ENCODE measurements at regions of chr15 and their contacts with region 1.

Region 1: GRCh38 chr15:70097337-70098169 is at the start of gene TLE3:
- DNase-seq: peak; percentile 96
- ATAC-seq: peak; percentile 56
- H3K4me3 Mint-ChIP-seq: peak within 1 kb of the TSS; percentile 98
- H3K27ac Mint-ChIP-seq: peak within 1 kb of the TSS; percentile 97
- H3K4me1 Mint-ChIP-seq: peaks cover 60% of the 10 kb centered on the region
- H3K27me3 Mint-ChIP-seq: peaks cover 2% of the 10 kb centered on the region
- CTCF ChIP-seq: no peak
- total RNA-seq, gene TLE3: 106 and 110 TPM in 2 replicates

Region 2: GRCh38 chr15:69576035-69576526 is 521.5 kb before region 1 on chr15:
- CTCF ChIA-PET with region 1: interaction called, 10 read pairs
- POLR2A ChIA-PET with region 1: interaction called, 6 read pairs
- intact Hi-C with region 1: loop called (anchors 2 kb)
- DNase-seq: peak; percentile 57
- ATAC-seq: peak; percentile 83
- H3K4me3 Mint-ChIP-seq: no peak overlapping the region
- H3K27ac Mint-ChIP-seq: no peak overlapping the region
- H3K4me1 Mint-ChIP-seq: peaks cover 14% of the 10 kb centered on the region
- H3K27me3 Mint-ChIP-seq: peaks cover 11% of the 10 kb centered on the region
- CTCF ChIP-seq: no peak

Region 3: DNA sequence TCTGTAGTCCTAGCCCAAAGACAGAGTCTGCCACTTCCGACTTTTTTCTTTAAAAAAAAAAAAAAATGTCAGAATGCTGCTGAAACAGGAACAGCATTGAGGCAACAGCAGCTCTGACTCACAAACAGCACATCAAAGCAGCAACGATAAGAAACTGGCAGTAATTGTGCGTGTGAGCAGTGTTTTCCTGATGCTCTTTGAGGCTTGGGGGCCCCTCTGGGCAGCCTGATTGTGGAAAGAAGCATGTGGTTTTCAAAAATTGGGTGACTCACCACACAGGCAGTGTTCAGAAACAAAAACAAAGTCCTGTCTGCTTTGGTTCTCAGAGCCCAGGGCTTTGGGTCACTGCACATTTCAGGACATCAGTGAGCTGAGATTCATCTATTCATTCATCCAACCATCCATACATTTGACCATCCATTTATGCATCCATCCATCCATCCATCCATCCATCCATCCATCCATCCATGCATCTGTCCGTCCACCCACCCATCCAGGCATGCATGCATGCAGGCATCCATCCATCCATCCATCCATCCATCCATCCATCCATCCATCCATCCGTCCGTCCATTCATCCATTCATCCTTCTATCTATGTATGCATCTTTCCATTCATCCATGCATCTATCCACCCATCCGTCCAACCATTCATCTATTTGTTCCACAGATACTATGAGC is 336.5 kb before region 1 on chr15:
- CTCF ChIA-PET with region 1: no interaction called
- POLR2A ChIA-PET with region 1: interaction called, 84 read pairs
- intact Hi-C with region 1: no loop called
- DNase-seq: peak; percentile 41
- ATAC-seq: peak; percentile 71
- H3K4me3 Mint-ChIP-seq: peak overlapping the region; percentile 11
- H3K27ac Mint-ChIP-seq: peak overlapping the region; percentile 57
- H3K4me1 Mint-ChIP-seq: peaks cover 74% of the 10 kb centered on the region
- H3K27me3 Mint-ChIP-seq: no peaks in the 10 kb centered on the region
- CTCF ChIP-seq: no peak

Region 4: DNA sequence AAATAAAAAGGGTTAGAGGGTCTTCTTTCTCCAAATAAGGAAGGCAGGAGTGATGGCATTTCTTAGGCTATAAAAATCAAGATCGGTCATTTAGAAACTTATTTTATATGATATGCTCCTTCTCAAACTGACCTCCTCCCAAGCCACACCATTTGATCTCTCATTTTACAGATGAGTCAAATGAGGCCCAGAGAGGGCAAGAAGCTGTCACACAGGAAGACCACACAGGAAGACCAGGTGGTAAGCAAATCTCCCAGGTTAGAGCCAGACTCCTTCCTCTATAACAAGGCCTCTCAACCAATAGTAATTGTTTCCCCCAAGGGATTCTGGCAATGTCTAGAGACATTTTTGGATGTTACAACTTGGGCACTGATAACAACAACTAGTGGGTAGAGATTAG is 13.6 kb before region 1 on chr15:
- CTCF ChIA-PET with region 1: interaction called, 6 read pairs
- POLR2A ChIA-PET with region 1: interaction called, 18 read pairs
- intact Hi-C with region 1: no loop called
- DNase-seq: no peak
- ATAC-seq: no peak
- H3K4me3 Mint-ChIP-seq: no peak overlapping the region
- H3K27ac Mint-ChIP-seq: no peak overlapping the region
- H3K4me1 Mint-ChIP-seq: peaks cover 70% of the 10 kb centered on the region
- H3K27me3 Mint-ChIP-seq: no peaks in the 10 kb centered on the region
- CTCF ChIP-seq: no peak

Region 5: DNA sequence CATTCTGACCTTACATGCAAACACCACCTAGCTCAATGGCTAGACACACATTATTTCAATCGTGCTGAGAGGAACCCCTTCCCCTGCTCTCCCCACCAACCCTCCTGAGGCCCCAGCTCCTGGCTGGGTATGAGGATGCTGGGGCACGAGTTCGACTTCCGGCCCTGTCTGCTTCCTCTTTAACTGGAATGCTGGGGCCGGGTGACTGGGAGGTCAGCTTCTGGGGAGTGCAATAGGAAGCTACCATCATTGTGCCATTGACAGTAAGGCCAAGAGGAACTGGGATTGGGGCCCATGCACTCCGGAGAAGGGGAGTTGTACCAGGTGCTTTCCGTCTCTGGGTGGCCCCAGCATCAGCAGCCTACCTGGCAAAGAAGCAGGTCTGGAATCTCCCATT is 15.7 kb after region 1 on chr15:
- CTCF ChIA-PET with region 1: no interaction called
- POLR2A ChIA-PET with region 1: no interaction called
- intact Hi-C with region 1: no loop called
- DNase-seq: no peak
- ATAC-seq: no peak
- H3K4me3 Mint-ChIP-seq: no peak overlapping the region
- H3K27ac Mint-ChIP-seq: no peak overlapping the region
- H3K4me1 Mint-ChIP-seq: peaks cover 5% of the 10 kb centered on the region
- H3K27me3 Mint-ChIP-seq: peaks cover 9% of the 10 kb centered on the region
- CTCF ChIP-seq: no peak

Region 6: DNA sequence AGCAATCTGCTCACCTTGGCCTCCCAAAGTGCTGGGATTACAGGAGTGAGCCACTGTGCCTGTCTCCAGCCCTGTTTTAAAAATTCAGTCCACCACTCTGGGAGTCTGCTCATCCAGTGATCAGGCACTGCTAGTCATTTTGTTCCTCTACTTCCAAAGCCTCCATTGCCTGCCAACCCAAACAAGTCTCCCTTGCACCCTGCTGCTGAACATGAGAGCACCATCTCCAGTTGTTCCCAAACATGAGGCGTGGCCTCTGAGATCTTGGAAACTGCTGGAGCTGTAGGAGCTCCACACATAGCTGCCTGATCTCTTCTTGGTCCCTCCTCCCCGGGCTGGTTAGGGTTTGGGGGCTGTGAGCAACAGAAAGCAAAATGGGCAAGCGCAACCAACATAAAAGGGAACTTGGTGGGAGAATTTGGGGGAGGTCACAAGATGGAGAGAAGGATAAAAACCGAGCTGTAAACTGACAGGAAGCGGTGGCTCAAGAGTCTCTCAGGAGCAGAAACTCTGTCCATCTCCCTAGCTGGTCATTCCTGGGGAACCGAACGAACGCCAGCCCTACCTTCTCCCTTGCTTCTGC is 49.7 kb after region 1 on chr15:
- CTCF ChIA-PET with region 1: no interaction called
- POLR2A ChIA-PET with region 1: no interaction called
- intact Hi-C with region 1: no loop called
- DNase-seq: no peak
- ATAC-seq: no peak
- H3K4me3 Mint-ChIP-seq: no peak overlapping the region
- H3K27ac Mint-ChIP-seq: no peak overlapping the region
- H3K4me1 Mint-ChIP-seq: peaks cover 8% of the 10 kb centered on the region
- H3K27me3 Mint-ChIP-seq: peaks cover 16% of the 10 kb centered on the region
- CTCF ChIP-seq: no peak

Region 7: GRCh38 chr15:70281811-70282307 is 184.3 kb after region 1 on chr15:
- CTCF ChIA-PET with region 1: interaction called, 3 read pairs
- POLR2A ChIA-PET with region 1: interaction called, 12 read pairs
- intact Hi-C with region 1: loop called (anchors 2 kb)
- DNase-seq: peak; percentile 53
- ATAC-seq: peak; percentile 88
- H3K4me3 Mint-ChIP-seq: peak overlapping the region; percentile 33
- H3K27ac Mint-ChIP-seq: peak overlapping the region; percentile 94
- H3K4me1 Mint-ChIP-seq: peaks cover 55% of the 10 kb centered on the region
- H3K27me3 Mint-ChIP-seq: no peaks in the 10 kb centered on the region
- CTCF ChIP-seq: no peak

Region 8: DNA sequence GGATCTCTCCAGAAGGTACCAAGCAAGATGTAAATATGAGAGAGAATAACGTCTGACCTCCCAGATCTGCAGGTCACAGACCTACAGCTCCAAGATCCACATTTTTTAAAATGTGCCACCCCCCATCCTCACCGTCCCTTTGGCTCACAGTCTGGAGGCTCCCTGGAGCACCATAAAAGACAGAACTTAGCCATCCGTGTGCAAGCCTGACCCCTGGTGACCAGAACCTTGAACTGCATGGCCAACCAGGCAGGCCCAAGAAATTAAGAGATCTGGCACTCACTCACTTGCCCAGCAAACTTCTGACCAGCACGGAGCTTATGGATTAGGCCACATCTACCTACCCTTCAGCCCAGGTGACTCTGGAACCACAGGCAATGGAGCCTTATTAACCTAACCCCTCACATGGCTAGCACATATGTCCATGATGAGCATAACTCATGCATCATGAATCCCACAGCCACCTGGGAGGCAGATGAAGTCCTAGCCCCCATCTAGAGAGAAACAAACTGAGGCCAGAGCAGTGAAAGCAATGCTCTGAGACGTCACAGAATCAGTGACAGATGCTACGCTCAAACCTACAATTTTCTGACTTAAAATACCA is 390.6 kb after region 1 on chr15:
- CTCF ChIA-PET with region 1: interaction called, 6 read pairs
- POLR2A ChIA-PET with region 1: interaction called, 38 read pairs
- intact Hi-C with region 1: loop called (anchors 1 kb)
- DNase-seq: peak; percentile 68
- ATAC-seq: no peak
- H3K4me3 Mint-ChIP-seq: no peak overlapping the region
- H3K27ac Mint-ChIP-seq: peak overlapping the region; percentile 35
- H3K4me1 Mint-ChIP-seq: peaks cover 60% of the 10 kb centered on the region
- H3K27me3 Mint-ChIP-seq: no peaks in the 10 kb centered on the region
- CTCF ChIP-seq: peak; percentile 95

Measured in activated B cell treated with CpG ODN at 0.5 μM for 24 hours (primary cell).